Common myeloid progenitor, CD34-positive (primary cell): ENCODE measurements at regions of chr11 and their contacts with region 1.

Region 1: DNA sequence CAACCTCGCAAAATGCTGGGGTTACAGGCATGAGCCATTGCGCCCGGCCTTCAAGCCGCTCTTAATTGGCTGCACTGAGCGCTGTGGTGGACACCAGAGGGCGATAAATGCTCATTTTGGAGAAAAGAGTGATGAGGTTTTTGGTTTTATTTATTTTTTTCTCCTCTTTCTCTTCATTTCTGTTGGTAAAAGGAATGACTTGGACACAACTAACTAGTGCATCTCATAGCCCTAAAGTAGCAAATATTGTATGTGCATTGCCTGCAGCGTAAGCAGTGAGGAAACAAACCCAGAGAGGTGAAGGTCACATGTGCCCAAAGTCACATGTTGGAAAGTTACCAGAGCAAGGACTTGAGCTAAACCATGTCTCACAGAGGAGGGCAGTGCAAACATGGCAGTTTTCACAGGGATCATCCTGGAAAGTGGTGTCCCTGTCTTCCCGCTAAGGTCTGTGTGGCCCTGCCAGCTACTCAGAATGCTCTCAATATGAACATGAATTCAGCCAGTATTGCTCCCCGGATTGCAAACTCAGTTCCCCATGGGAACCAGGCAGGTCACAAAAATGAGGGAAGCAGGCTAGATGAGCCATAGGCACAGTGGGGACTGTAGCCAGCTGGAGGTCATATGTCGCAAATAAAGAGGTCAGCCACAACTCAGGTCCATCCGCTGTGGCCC is 8.6 kb upstream of the CD82 start:
- DNase-seq: peak; percentile 57 to 75 (median 69)
- H3K4me3 ChIP-seq: no peak overlapping the region
- H3K27ac ChIP-seq: no peak overlapping the region
- H3K4me1 ChIP-seq: peaks cover 8 to 35% (median 24%) of the 10 kb centered on the region in 4 experiments
- H3K27me3 ChIP-seq: no peaks in the 10 kb centered on the region

Region 2: DNA sequence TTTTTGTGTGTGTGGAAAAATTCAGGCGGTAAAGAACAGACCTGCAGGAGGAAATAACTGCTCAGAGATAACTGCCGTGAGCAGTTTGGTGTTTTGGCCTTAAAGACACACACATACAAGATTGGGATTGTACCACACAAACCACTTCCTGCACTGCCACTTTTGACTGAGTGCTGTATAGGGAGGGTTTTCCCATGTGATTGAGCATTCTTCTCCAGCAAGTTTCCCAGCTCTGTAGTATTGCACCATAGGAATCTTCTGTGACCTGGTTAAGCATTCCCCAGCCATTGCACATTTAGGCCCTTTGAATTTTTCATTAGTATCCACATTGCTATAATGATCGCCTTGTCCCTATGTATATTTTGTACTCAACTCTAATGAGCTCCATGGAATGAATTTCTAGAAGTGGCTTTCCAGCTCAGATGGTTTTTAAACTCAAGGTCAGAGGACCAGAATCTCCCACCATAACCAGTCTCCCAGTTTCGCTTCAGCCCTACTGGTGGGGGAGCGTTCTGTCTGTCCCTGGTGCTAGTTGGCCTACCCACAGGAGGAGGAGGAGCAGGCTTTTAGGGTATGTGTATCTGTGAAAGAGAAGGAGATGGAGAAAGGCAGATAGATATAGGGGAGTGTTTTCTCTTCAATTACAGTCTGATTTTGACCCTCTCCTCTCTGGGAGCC is 17.9 kb after region 1 on chr11:
- CTCF ChIA-PET with region 1: interaction called, 14 read pairs
- POLR2A ChIA-PET with region 1: interaction called, 4 read pairs
- DNase-seq: peak; percentile 70 to 91 (median 87)
- H3K4me3 ChIP-seq: peak overlapping the region in 5 of 7 experiments; percentile 21 to 46 (median 37)
- H3K27ac ChIP-seq: peak overlapping the region; percentile 69 to 84
- H3K4me1 ChIP-seq: peaks cover 39 to 100% (median 100%) of the 10 kb centered on the region in 4 experiments
- H3K27me3 ChIP-seq: no peaks in the 10 kb centered on the region

Region 3: DNA sequence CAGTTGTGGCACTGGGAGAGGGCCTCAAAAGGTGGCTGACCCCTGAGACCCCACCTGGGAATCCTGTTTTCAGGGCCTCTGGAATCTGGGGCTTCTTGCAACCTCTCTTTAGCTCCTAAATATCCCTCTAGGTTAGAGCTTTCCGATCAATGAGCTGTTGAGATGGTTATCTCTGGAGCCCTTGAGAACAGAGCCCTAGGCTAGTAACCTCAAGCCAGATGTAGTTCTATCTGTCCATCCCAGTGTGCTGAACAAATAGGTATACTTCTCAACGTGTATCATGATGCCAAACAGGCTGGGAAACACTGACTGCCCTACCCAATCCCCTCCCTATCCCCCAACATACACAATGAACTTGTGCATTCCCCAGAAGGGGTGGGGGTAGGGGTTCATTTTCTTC is 25.8 kb after region 1 on chr11:
- CTCF ChIA-PET with region 1: interaction called, 14 read pairs
- POLR2A ChIA-PET with region 1: interaction called, 4 read pairs
- DNase-seq: no peak
- H3K4me3 ChIP-seq: no peak overlapping the region
- H3K27ac ChIP-seq: no peak overlapping the region
- H3K4me1 ChIP-seq: peaks cover 3 to 42% (median 38%) of the 10 kb centered on the region in 4 experiments
- H3K27me3 ChIP-seq: no peaks in the 10 kb centered on the region

Region 4: GRCh38 chr11:44592125-44592940 is 35.5 kb after region 1 on chr11:
- CTCF ChIA-PET with region 1: interaction called, 17 read pairs
- POLR2A ChIA-PET with region 1: no interaction called
- DNase-seq: no peak
- H3K4me3 ChIP-seq: no peak overlapping the region
- H3K27ac ChIP-seq: no peak overlapping the region
- H3K4me1 ChIP-seq: peaks cover 0 to 29% (median 16%) of the 10 kb centered on the region in 4 experiments
- H3K27me3 ChIP-seq: no peaks in the 10 kb centered on the region

Region 5: DNA sequence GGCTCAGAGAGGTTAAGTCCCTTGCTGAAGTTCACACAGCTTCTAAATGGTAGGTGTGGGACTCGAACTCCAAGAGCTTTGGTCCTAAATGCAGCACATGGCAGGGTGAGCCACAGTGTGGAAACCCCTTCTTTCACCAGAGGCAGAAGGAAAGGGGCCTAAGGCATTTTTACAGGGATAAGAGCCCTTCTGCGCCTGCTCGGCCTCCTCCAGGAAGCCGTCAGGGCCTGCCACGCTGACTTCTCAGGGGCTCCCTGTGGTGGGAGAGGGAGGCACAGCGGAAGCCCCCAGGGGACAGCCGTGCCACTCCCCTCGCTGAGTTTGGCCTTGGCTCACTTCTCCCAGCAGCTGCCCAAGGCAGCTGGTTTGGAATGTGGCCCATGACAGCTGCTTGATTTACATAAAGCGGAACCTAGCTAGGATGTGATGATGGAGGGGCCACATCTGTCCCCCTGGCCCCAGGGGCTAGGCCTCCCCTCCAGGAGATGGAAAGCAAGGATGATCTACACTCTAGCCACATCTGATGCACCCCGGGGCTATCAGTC is 44.0 kb after region 1 on chr11:
- CTCF ChIA-PET with region 1: interaction called, 12 read pairs
- POLR2A ChIA-PET with region 1: no interaction called
- DNase-seq: peak in 2 of 3 donors; percentile 70 to 72
- H3K4me3 ChIP-seq: no peak overlapping the region
- H3K27ac ChIP-seq: peak overlapping the region in 1 of 2 experiments; percentile 45
- H3K4me1 ChIP-seq: peaks cover 0 to 38% (median 22%) of the 10 kb centered on the region in 4 experiments
- H3K27me3 ChIP-seq: no peaks in the 10 kb centered on the region

Region 6: DNA sequence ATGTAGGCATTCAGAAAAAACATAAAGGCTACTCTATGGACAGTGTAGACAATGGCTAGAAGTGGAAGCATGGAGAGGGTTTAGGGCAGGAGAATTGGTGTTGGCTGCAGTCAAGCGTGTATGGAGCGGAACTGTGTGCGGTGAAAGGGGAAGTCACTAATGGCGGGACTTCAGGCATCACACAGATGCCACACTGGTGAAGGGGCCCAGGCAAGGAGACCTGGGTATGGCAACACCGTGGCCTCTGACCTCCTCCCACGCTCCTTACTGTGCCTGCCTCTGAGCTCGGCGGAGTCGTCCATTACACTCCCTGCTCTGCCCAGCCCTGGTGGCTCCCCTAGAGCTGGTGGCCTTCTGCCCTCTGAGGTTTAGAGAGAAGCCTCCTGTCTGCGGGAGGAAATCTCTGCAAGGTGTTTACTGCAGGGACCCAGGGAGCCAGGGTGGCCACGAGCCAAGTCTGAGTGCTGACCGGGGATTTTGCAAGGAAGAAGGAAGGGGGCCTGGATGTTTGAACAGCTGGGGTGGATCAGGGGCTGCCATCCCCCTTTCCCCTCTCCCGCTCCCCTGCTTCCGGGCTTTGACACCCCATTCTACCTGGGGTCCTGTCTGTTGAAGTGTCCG is 94.8 kb after region 1 on chr11:
- CTCF ChIA-PET with region 1: no interaction called
- POLR2A ChIA-PET with region 1: no interaction called
- DNase-seq: peak in 2 of 3 donors; percentile 39 to 45
- H3K4me3 ChIP-seq: no peak overlapping the region
- H3K27ac ChIP-seq: no peak overlapping the region
- H3K4me1 ChIP-seq: peaks cover 0 to 5% (median 0%) of the 10 kb centered on the region in 4 experiments
- H3K27me3 ChIP-seq: peaks cover 0 to 6% (median 3%) of the 10 kb centered on the region in 5 experiments